ENCODE measurements at regions of chr7 and their contacts with region 1.

Region 1: DNA sequence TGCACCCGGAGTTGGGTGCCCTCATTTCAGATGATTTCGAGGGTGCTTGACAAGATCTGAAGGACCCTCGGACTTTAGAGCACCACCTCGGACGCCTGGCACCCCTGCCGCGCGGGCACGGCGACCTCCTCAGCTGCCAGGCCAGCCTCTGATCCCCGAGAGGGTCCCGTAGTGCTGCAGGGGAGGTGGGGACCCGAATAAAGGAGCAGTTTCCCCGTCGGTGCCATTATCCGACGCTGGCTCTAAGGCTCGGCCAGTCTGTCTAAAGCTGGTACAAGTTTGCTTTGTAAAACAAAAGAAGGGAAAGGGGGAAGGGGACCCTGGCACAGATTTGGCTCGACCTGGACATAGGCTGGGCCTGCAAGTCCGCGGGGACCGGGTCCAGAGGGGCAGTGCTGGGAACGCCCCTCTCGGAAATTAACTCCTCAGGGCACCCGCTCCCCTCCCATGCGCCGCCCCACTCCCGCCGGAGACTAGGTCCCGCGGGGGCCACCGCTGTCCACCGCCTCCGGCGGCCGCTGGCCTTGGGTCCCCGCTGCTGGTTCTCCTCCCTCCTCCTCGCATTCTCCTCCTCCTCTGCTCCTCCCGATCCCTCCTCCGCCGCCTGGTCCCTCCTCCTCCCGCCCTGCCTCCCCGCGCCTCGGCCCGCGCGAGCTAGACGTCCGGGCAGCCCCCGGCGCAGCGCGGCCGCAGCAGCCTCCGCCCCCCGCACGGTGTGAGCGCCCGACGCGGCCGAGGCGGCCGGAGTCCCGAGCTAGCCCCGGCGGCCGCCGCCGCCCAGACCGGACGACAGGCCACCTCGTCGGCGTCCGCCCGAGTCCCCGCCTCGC is at the start of gene EGFR:
- DNase-seq: peak; percentile 80 to 96
- H3K4me3 ChIP-seq: peak within 1 kb of the TSS; percentile 79
- H3K27ac ChIP-seq: peak within 1 kb of the TSS; percentile 68
- H3K4me1 ChIP-seq: peaks cover 37% of the 10 kb centered on the region
- H3K27me3 ChIP-seq: no peaks in the 10 kb centered on the region
- CTCF ChIP-seq: no peak
- total RNA-seq, gene EGFR: 324 and 342 TPM in 2 replicates

Region 2: DNA sequence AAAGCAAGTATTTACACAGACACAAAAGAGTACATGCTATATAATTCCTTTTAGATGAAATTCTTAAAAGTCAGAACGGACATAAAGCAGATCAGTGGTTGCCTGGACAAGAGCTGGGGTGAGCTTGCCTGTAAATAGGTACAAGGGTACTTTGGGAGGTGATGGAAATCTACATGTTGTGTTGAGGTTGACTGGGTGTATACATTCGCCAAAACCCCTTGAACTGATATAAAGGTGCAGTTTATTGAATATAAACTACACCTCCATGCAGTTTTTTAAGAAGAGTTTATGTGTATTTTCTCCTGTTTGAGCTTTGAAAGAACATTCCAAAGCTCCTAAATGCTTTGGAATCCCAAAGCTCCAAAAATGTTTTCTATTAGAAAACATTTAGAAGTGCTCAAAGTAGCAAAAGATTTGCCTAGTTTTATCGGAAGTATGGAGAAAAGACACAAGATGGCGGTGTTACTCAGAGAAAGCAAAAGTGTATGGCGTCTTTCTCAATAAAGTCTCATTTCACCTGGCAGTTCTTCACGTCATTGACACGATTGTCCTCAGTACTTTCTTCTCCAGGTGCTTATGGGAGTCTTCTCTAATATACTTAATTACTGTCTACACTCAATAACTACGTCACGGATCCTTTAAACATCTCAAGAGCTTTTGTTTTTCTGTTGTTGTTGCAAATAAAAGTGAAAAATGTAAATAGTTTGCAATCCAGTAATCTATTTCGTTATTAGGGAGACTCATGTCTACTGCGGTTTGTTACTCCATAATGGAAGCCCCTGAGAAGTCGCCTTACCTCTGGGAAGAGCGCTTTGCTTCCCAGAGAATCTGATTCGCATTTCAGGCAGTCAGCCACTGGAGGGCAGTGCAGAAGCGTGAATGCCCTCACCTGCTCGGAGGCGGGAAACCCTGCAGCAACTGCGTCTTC is 244.8 kb before region 1 on chr7:
- CTCF ChIA-PET with region 1: no interaction called
- POLR2A ChIA-PET with region 1: no interaction called
- intact Hi-C with region 1: loop called (anchors 1 kb)
- DNase-seq: peak; percentile 94
- H3K4me3 ChIP-seq: peak overlapping the region; percentile 58
- H3K27ac ChIP-seq: peak overlapping the region; percentile 67
- H3K4me1 ChIP-seq: peaks cover 20% of the 10 kb centered on the region
- H3K27me3 ChIP-seq: no peaks in the 10 kb centered on the region
- CTCF ChIP-seq: peak; percentile 100

Region 3: GRCh38 chr7:54839538-54840213 is 178.9 kb before region 1 on chr7:
- CTCF ChIA-PET with region 1: no interaction called
- POLR2A ChIA-PET with region 1: interaction called, 3 read pairs
- intact Hi-C with region 1: loop called (anchors 1 kb)
- DNase-seq: peak; percentile 91 to 95
- H3K4me3 ChIP-seq: 0 out of 2 replicates have a peak overlapping the region, but pooled peaks have one; percentile 2
- H3K27ac ChIP-seq: peak overlapping the region; percentile 51
- H3K4me1 ChIP-seq: peaks cover 48% of the 10 kb centered on the region
- H3K27me3 ChIP-seq: no peaks in the 10 kb centered on the region
- CTCF ChIP-seq: peak; percentile 100

Region 4: DNA sequence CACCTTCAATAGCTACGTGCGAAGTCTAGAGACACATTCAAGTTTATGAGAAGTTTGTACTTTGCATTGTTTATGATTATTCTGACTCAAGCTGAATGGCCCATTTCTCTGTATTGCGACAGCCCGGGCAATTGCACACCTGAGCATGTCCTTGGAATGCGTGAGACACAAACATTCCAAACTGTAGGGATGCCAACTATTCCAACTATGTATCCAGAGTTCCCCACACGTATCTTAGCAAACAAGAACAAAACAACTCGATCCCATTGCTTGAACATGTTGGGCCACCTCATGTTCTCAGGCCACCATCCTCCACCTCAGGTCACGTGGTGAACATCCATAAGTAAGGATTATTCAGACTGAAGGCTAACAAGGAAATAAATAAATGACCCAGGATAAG is 51.2 kb before region 1 on chr7:
- CTCF ChIA-PET with region 1: interaction called, 3 read pairs
- POLR2A ChIA-PET with region 1: interaction called, 17 read pairs
- intact Hi-C with region 1: loop called (anchors 1 kb)
- DNase-seq: peak; percentile 92 to 100
- H3K4me3 ChIP-seq: peak overlapping the region; percentile 2; the same call in 1 of the 2 replicates
- H3K27ac ChIP-seq: peak overlapping the region; percentile 89
- H3K4me1 ChIP-seq: peaks cover 50% of the 10 kb centered on the region
- H3K27me3 ChIP-seq: no peaks in the 10 kb centered on the region
- CTCF ChIP-seq: no peak

Region 5: DNA sequence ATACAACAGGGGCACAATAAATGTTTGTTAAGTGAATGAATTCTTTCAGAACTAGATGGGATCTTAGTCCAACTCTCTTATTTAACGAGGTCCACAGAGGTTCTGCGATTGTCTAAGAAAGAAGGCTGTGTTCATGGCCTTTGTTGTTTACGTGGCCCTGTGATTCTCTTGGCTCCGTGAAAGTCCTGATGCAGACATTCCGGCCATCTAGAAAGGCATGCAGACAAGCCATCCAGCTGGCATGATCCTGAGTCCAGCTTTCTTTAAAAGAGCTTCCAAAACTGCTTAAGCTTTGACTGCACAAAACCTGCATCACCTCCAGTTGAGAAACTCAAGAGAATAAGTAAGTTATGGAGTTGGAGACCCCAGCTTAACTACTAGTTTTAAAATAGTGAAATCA is 26.2 kb after region 1 on chr7:
- CTCF ChIA-PET with region 1: interaction called, 3 read pairs
- POLR2A ChIA-PET with region 1: interaction called, 3 read pairs
- intact Hi-C with region 1: loop called (anchors 1 kb)
- DNase-seq: no peak
- H3K4me3 ChIP-seq: no peak overlapping the region
- H3K27ac ChIP-seq: peak overlapping the region; percentile 45
- H3K4me1 ChIP-seq: peaks cover 60% of the 10 kb centered on the region
- H3K27me3 ChIP-seq: no peaks in the 10 kb centered on the region
- CTCF ChIP-seq: no peak

Region 6: GRCh38 chr7:55120481-55121198 is 102.1 kb after region 1 on chr7:
- CTCF ChIA-PET with region 1: no interaction called
- POLR2A ChIA-PET with region 1: no interaction called
- intact Hi-C with region 1: loop called (anchors 2 kb)
- DNase-seq: peak; percentile 71 to 98
- H3K4me3 ChIP-seq: peak overlapping the region; percentile 3; the same call in 1 of the 2 replicates
- H3K27ac ChIP-seq: peak overlapping the region; percentile 79
- H3K4me1 ChIP-seq: peaks cover 77% of the 10 kb centered on the region
- H3K27me3 ChIP-seq: no peaks in the 10 kb centered on the region
- CTCF ChIP-seq: no peak

Region 7: GRCh38 chr7:55432939-55433784 is 414.6 kb after region 1 on chr7:
- CTCF ChIA-PET with region 1: no interaction called
- POLR2A ChIA-PET with region 1: no interaction called
- intact Hi-C with region 1: no loop called
- DNase-seq: peak; percentile 47 to 79
- H3K4me3 ChIP-seq: no peak overlapping the region
- H3K27ac ChIP-seq: no peak overlapping the region
- H3K4me1 ChIP-seq: no peaks in the 10 kb centered on the region
- H3K27me3 ChIP-seq: no peaks in the 10 kb centered on the region
- CTCF ChIP-seq: peak; percentile 93